Stomach (tissue), 19 donors: ENCODE measurements at regions of chr10 and their contacts with region 1.

Region 1: GRCh38 chr10:67697724-67698131 is 1.7 kb upstream of the CTNNA3 start:
- DNase-seq: peak in 1 of 2 donors; percentile 71
- H3K4me3 ChIP-seq: no peak overlapping the region
- H3K27ac ChIP-seq: no peak overlapping the region
- H3K4me1 ChIP-seq: peaks cover 0 to 15% (median 5%) of the 10 kb centered on the region in 4 donors
- H3K27me3 ChIP-seq: no peaks in the 10 kb centered on the region
- CTCF ChIP-seq: peak in 5 of 7 experiments; percentile 25 to 70 (median 65)
- EP300 ChIP-seq: no peak
- POLR2A ChIP-seq: no peak

Region 2: GRCh38 chr10:67602268-67602950 is 95.3 kb before region 1 on chr10:
- intact Hi-C with region 1: no loop called
- DNase-seq: peak in 1 of 2 donors; percentile 32
- H3K4me3 ChIP-seq: no peak overlapping the region
- H3K27ac ChIP-seq: no peak overlapping the region
- H3K4me1 ChIP-seq: no peaks in the 10 kb centered on the region
- H3K27me3 ChIP-seq: peaks cover 0 to 5% (median 0%) of the 10 kb centered on the region in 3 donors
- CTCF ChIP-seq: no peak
- EP300 ChIP-seq: no peak
- POLR2A ChIP-seq: no peak

Region 3: GRCh38 chr10:67657775-67658174 is 40.0 kb before region 1 on chr10:
- intact Hi-C with region 1: no loop called
- DNase-seq: no peak
- H3K4me3 ChIP-seq: no peak overlapping the region
- H3K27ac ChIP-seq: no peak overlapping the region
- H3K4me1 ChIP-seq: no peaks in the 10 kb centered on the region
- H3K27me3 ChIP-seq: no peaks in the 10 kb centered on the region
- CTCF ChIP-seq: no peak
- EP300 ChIP-seq: no peak
- POLR2A ChIP-seq: no peak

Region 4: GRCh38 chr10:67779465-67780203 is 81.9 kb after region 1 on chr10:
- intact Hi-C with region 1: loop called (anchors 5 kb)
- DNase-seq: peak; percentile 65 to 93
- H3K4me3 ChIP-seq: no peak overlapping the region
- H3K27ac ChIP-seq: no peak overlapping the region
- H3K4me1 ChIP-seq: peaks cover 0 to 11% (median 4%) of the 10 kb centered on the region in 4 donors
- H3K27me3 ChIP-seq: no peaks in the 10 kb centered on the region
- CTCF ChIP-seq: peak in 5 of 7 experiments; percentile 67 to 85 (median 77)
- EP300 ChIP-seq: no peak
- POLR2A ChIP-seq: no peak